ENCODE measurements at regions of chr11 and their contacts with region 1.

Region 1: GRCh38 chr11:117107701-117108590 is 9.7 kb upstream of the SIK3 start:
- DNase-seq: peak; percentile 27
- H3K4me3 ChIP-seq: no peak overlapping the region
- H3K27ac ChIP-seq: no peak overlapping the region
- H3K4me1 ChIP-seq: peaks cover 5% of the 10 kb centered on the region; the same call in 1 of the 2 replicates
- H3K27me3 ChIP-seq: no peaks in the 10 kb centered on the region

Region 2: GRCh38 chr11:116787786-116788486 is 320.0 kb before region 1 on chr11 and contains the start of gene ZPR1:
- in situ Hi-C with region 1: loop called (anchors 10 kb)
- DNase-seq: peak; percentile 89
- H3K4me3 ChIP-seq: peak within 1 kb of the TSS; percentile 97
- H3K27ac ChIP-seq: peak within 1 kb of the TSS; percentile 82
- H3K4me1 ChIP-seq: peaks cover 24% of the 10 kb centered on the region
- H3K27me3 ChIP-seq: no peaks in the 10 kb centered on the region
- total RNA-seq, gene ZPR1: 30.8 and 34.9 TPM in 2 replicates

Region 3: GRCh38 chr11:116879800-116880625 is 227.9 kb before region 1 on chr11:
- in situ Hi-C with region 1: loop called (anchors 10 kb)
- DNase-seq: peak; percentile 88
- H3K4me3 ChIP-seq: no peak overlapping the region
- H3K27ac ChIP-seq: no peak overlapping the region
- H3K4me1 ChIP-seq: peaks cover 23% of the 10 kb centered on the region
- H3K27me3 ChIP-seq: no peaks in the 10 kb centered on the region

Region 4: DNA sequence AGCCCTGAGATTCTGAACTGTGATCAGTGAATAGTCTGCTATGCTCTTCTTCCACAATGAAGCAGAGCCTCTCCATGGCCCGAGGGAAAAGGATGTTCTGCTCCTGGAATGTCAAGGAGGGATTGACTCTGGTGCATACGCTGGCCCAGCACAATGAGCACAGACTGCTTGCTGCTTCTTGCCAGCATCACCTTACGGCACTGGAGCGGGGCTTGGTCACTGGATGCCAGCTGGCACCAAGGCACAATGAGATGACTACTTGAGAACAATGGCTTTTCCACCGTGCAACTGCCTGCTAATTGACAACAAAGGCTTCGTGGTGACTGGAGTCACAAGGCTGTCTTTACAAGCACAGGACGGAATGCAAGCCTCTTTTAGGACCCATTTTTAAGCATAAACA is 549.8 kb after region 1 on chr11:
- in situ Hi-C with region 1: no loop called
- DNase-seq: no peak
- H3K4me3 ChIP-seq: no peak overlapping the region
- H3K27ac ChIP-seq: no peak overlapping the region
- H3K4me1 ChIP-seq: no peaks in the 10 kb centered on the region
- H3K27me3 ChIP-seq: peaks cover 20% of the 10 kb centered on the region

Measured in GM23248 (cell line).